Heart right ventricle (tissue), 16 donors: ENCODE measurements at regions of chr11 and their contacts with region 1.

Region 1: DNA sequence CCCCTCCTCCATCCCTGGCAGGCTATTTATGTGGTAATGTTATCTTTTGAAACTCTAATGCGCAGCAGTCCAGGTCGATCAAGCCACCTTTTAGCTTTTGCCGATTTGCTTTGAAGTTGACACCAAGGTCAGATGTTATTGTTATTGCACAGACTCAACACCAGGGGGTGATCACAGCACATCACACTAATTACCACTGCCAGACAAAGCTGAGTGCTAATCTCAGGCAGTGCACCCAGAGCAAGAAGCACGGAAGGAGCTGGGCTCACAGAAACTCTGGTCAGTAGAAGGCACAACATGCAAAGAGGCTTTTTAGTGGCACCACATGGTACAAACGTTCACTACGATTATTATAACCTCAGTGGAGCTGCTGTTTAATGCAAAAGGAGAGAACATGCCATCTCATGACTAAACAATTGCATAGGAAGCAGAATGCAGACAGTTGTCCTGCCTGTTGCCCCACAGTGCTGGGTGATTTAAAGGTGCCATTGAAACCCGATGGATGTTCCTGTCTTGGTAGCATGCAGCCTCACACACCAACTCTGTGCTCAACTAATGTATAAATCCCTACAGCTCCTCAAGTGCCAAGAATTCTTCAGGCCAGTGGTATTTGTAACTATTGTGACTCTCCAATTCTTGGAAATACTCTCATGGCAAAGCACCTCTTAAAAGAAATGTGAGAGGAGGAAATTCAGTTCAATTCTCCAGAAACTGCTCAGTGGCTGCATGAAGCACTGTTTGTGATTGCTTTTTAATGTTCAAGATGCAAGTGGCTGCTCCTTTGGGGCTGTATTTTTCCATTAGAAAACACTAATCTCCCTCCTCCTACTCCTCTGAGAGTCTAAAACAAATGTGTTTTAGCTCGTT is 353.9 kb upstream of the DDI1 start:
- DNase-seq: peak; percentile 25 to 66
- ATAC-seq: peak; percentile 91 to 97 (median 95)
- H3K4me3 ChIP-seq: peak overlapping the region in 1 of 10 donors; percentile 16
- H3K27ac ChIP-seq: peak overlapping the region in 4 of 10 donors; percentile 7 to 53 (median 28)
- H3K4me1 ChIP-seq: peaks cover 0 to 12% (median 10%) of the 10 kb centered on the region in 9 donors
- H3K27me3 ChIP-seq: no peaks in the 10 kb centered on the region
- CTCF ChIP-seq: peak; percentile 74 to 90 (median 88)

Region 2: DNA sequence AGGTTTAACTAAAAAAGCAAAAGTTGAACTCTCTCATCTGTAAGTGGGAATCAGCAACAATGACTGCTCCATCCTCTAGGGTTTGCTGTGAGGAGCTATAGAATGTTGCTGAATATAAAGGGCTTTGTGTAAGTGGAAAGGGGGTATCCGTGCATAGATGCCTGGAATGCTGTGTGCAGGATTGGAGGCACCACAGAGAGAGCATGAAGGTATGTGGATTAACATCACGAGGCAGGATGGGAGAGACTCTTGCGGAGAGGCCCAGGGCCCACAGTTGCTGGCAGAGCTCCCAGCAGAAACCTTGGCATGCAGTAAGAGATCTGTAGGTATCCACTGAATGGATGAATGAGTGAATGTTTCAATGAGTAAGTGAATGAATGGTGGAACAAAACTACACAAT is 55.2 kb after region 1 on chr11:
- intact Hi-C with region 1: loop called in 1 of 10 experiments (anchors 2 kb)
- DNase-seq: peak; percentile 18 to 30
- ATAC-seq: peak in 5 of 8 donors; percentile 37 to 66 (median 40)
- H3K4me3 ChIP-seq: no peak overlapping the region
- H3K27ac ChIP-seq: peak overlapping the region in 9 of 10 donors; percentile 65 to 86 (median 72)
- H3K4me1 ChIP-seq: peaks cover 0 to 52% (median 33%) of the 10 kb centered on the region in 9 donors
- H3K27me3 ChIP-seq: no peaks in the 10 kb centered on the region
- CTCF ChIP-seq: no peak

Region 3: DNA sequence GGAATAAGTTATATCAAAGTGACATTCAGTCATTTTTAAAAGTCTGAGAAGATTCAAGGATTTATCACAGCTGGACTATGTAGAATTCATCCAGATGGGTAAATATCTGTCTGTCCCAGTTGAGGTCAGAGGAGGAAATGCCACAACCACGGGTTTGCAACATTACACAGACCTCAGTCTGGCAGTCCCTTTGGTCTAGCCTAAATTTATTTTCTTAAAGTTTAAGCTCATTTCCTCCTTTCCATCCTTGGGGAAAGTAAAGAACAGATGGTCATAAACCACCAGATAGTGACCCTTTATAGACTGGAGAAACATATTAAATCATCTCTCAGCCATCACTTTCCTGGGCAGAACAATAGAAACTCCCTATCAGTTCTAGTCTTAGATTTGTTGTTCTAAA is 115.5 kb after region 1 on chr11:
- intact Hi-C with region 1: loop called in 3 of 10 experiments (anchors 10 kb)
- DNase-seq: peak in 1 of 2 donors; percentile 20
- ATAC-seq: peak in 7 of 8 donors; percentile 37 to 73 (median 67)
- H3K4me3 ChIP-seq: no peak overlapping the region
- H3K27ac ChIP-seq: peak overlapping the region in 8 of 10 donors; percentile 16 to 76 (median 48)
- H3K4me1 ChIP-seq: peaks cover 0 to 27% (median 18%) of the 10 kb centered on the region in 9 donors
- H3K27me3 ChIP-seq: no peaks in the 10 kb centered on the region
- CTCF ChIP-seq: no peak

Region 4: DNA sequence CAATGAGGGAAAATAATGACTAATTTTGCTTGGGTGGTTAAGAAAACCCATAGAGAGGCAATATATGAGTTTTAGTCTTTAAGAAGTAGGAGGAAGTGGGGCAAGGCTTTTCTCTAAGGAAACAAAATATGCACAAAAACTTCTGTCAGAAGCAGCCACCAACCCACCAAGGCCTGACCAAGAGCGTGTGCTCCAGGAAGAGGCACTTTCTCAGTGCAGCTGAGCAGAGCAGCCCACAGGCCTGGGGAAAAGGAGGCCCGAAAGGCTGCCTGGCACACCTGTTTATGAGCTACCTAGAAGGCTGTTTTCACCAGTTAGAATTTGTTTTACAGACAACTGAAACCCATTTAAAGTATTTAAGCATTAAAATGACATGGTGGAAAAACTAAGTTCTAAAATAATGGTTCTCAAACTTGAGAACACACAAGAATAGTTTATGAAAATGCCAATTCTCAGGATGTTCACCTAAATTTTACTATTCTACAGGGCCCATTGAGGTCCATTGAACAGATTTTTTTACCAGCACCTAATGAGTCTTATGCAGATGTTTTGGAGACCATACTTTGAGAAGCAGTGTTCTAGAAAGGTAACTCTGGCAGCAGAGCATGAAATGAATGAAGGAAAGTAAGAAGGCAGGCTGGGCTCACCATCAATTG is 193.4 kb after region 1 on chr11:
- intact Hi-C with region 1: loop called in 1 of 10 experiments (anchors 10 kb)
- DNase-seq: no peak
- ATAC-seq: no peak
- H3K4me3 ChIP-seq: no peak overlapping the region
- H3K27ac ChIP-seq: no peak overlapping the region
- H3K4me1 ChIP-seq: peaks cover 0 to 17% (median 0%) of the 10 kb centered on the region in 9 donors
- H3K27me3 ChIP-seq: no peaks in the 10 kb centered on the region
- CTCF ChIP-seq: no peak

Region 5: DNA sequence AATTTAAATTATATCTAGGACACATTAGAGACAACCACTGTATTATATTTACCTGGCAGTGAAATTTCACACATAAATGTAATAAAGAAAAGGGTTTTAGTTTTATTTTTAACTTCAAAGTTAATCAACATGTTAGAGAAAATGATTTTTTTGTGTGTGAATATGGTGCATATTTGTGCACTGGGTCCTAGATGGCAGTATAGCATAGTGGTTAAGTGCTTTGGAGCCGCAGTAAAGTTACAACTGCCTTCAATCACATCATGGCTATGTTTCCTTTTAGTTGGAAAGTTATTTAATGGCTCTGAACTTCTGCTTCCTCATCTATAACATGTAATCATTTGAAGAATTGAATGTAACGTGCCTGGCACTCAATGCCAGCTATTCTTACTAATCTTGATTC is 245.0 kb after region 1 on chr11:
- intact Hi-C with region 1: loop called in 3 of 10 experiments (anchors 10 kb)
- DNase-seq: no peak
- ATAC-seq: no peak
- H3K4me3 ChIP-seq: no peak overlapping the region
- H3K27ac ChIP-seq: no peak overlapping the region
- H3K4me1 ChIP-seq: peaks cover 0 to 13% (median 6%) of the 10 kb centered on the region in 9 donors
- H3K27me3 ChIP-seq: no peaks in the 10 kb centered on the region
- CTCF ChIP-seq: peak in 6 of 9 donors; percentile 32 to 54 (median 48)

Region 6: GRCh38 chr11:104151404-104152204 is 469.1 kb after region 1 on chr11:
- intact Hi-C with region 1: loop called in 9 of 10 experiments (anchors 1 to 5 kb)
- DNase-seq: no peak
- ATAC-seq: no peak
- H3K4me3 ChIP-seq: no peak overlapping the region
- H3K27ac ChIP-seq: no peak overlapping the region
- H3K4me1 ChIP-seq: peaks cover 0 to 13% (median 5%) of the 10 kb centered on the region in 9 donors
- H3K27me3 ChIP-seq: no peaks in the 10 kb centered on the region
- CTCF ChIP-seq: peak in 8 of 9 donors; percentile 11 to 58 (median 42)

Region 7: GRCh38 chr11:104164028-104164520 is 481.5 kb after region 1 on chr11 and contains the start of gene PDGFD:
- intact Hi-C with region 1: loop called in 2 of 10 experiments (anchors 5 to 10 kb)
- DNase-seq: peak; percentile 65
- ATAC-seq: peak; percentile 87 to 97 (median 92)
- H3K4me3 ChIP-seq: peak within 1 kb of the TSS; percentile 37 to 72 (median 66)
- H3K27ac ChIP-seq: peak within 1 kb of the TSS in 9 of 10 donors; percentile 33 to 71 (median 62)
- H3K4me1 ChIP-seq: peaks cover 0 to 17% (median 7%) of the 10 kb centered on the region in 9 donors
- H3K27me3 ChIP-seq: peaks cover 0 to 14% (median 0%) of the 10 kb centered on the region in 7 donors
- CTCF ChIP-seq: peak in 8 of 9 donors; percentile 29 to 67 (median 54)
- total RNA-seq, gene PDGFD: 7.3 to 17.5 (median 11.3) TPM